Activated T-helper 1 cell treated with anti-CD3 and anti-CD28 coated beads, Interleukin-12 subunit alpha, Interleukin-12 subunit beta, Interleukin-2, Interleukin-4 antibody, amounts not matched to agents 30 ng/mL and 10 ng/mL and 1 ng/mL, durations not matched to agents 14 hours and 24 hours and 36 hours (primary cell): ENCODE measurements at regions of chr19 and their contacts with region 1.

Region 1: GRCh38 chr19:19776041-19777008 is 43.4 kb upstream of the ZNF14 start:
- DNase-seq: peak; percentile 90
- H3K4me3 Mint-ChIP-seq: peak overlapping the region; percentile 96
- H3K27ac Mint-ChIP-seq: peak overlapping the region; percentile 89
- H3K4me1 Mint-ChIP-seq: peaks cover 42% of the 10 kb centered on the region
- H3K27me3 Mint-ChIP-seq: no peaks in the 10 kb centered on the region

Region 2: DNA sequence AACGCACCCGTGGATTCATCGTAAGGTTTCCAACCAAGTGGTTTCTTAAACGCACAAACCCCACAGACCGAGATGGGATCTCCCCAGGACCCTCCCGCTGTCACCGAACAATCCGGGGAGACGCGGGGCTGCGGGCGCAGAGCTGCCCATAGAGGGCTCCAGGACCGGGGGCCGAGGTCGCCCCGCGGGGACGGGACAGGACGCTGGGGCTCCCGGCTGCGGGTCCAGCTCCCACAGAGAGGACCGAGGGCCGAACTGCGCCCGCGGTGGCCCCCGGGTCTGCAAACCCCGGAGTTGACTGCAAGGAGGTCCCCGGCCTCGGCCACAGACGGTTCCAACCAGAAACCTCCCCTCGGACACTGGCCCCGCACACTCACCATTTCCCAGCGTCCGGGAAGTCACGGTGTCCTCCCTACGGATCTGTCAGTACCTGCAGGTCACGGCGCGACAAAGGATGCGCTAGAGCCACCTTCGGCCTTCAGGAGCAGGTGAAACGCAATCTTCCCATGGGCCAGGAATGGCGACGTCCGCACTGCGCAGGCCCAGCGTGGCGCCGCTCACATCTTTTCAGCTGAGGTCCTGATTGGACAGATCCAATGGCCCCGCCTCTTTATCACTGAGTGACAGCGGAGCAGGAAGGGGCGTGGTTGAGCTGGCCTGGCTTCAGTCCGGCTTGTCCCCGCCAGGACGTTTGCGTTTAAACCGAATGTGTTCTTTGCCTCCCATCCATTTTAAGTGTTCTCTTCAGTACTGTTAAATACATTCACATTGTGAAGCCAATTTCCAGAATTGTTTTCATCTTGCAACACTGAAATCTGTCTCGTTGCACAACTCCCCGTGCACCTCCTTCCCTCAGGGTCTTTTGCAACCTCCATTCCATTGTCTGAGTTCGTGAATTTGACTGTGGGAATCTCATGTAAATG is 43.5 kb before region 1 on chr19 and contains the start of gene ZNF14:
- intact Hi-C with region 1: loop called (anchors 1 kb)
- DNase-seq: peak; percentile 86
- H3K4me3 Mint-ChIP-seq: peak within 1 kb of the TSS; percentile 99
- H3K27ac Mint-ChIP-seq: peak within 1 kb of the TSS; percentile 92
- H3K4me1 Mint-ChIP-seq: peaks cover 17% of the 10 kb centered on the region
- H3K27me3 Mint-ChIP-seq: no peaks in the 10 kb centered on the region
- total RNA-seq, gene ZNF14: 4.3 and 5.1 TPM in 2 replicates

Region 3: DNA sequence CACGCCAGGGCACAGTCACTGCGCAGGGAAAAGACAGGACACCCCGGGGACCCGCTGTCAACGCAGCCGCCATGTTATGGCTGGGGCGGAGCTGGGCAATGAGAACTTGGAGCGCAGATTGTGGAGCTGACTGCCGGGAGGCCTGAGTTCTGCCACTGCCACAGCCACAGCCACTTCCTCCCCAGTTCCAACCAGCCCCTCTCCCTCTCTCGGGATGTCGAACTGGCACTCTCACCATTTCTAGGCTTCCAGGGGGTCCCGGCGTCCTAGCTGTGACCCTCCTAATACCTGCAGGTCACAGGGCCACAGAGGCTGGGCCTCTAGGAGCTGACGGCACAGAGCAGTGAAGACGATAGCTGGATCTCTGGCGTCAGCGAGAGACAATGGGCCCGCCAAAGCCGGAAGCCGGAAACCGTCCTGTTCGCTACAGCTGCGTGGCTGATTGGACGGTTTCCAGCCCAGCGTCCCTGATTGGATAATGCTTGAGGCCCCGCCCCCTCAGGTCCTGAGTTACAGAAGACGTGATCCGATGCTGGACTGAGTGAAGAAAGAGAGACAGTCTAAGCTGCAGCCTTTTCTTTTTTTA is 45.1 kb after region 1 on chr19 and contains the start of gene ZNF506:
- intact Hi-C with region 1: loop called (anchors 1 kb)
- DNase-seq: peak; percentile 88
- H3K4me3 Mint-ChIP-seq: peak within 1 kb of the TSS; percentile 98
- H3K27ac Mint-ChIP-seq: peak within 1 kb of the TSS; percentile 97
- H3K4me1 Mint-ChIP-seq: peaks cover 10% of the 10 kb centered on the region
- H3K27me3 Mint-ChIP-seq: no peaks in the 10 kb centered on the region
- total RNA-seq, gene ZNF506: 13.5 and 15.7 TPM in 2 replicates

Region 4: DNA sequence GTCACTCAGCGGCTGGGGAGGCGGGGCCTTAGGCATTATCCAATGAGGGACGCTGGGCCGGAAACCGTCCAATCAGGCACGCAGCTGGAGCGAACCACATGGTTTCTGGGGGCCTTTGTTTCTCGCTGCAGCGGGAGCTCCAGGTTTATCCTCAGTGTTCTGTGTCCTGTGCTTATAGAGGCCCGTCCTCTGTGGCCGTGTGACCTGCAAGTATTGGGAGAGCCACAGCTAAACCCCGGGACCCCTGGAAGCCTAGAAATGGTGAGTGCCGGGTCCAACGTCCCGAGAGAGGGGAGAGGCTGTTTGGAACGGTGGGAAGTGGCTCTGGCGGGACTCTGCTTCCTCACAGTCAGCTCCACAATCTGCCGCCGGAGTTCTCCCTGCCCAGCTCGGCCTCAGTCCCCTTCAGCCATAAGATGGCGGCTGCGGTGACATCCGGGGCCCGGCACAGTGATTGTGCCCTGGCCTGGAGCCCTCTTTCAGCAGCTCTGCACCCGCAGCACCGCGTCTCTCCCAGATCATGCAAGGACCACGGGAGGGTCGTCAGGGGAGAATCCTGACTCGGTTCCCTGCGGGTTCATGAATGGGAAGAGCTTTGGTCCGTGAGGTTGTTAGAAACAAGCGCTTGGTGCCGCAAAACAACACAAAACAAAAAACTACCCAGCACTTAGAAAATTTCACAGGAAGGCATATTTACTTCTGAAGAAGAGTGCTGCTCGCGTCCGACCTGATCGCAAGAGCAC is 89.6 kb after region 1 on chr19 and contains the start of gene ZNF253:
- intact Hi-C with region 1: loop called (anchors 1 kb)
- DNase-seq: peak; percentile 91
- H3K4me3 Mint-ChIP-seq: peak within 1 kb of the TSS; percentile 98
- H3K27ac Mint-ChIP-seq: peak within 1 kb of the TSS; percentile 99
- H3K4me1 Mint-ChIP-seq: peaks cover 18% of the 10 kb centered on the region
- H3K27me3 Mint-ChIP-seq: no peaks in the 10 kb centered on the region
- total RNA-seq, gene ZNF253: 7.8 and 11.1 TPM in 2 replicates

Region 5: GRCh38 chr19:19900729-19901444 is 124.6 kb after region 1 on chr19 and contains the start of gene ZNF93:
- intact Hi-C with region 1: loop called (anchors 1 kb)
- DNase-seq: peak; percentile 85
- H3K4me3 Mint-ChIP-seq: peak within 1 kb of the TSS; percentile 95
- H3K27ac Mint-ChIP-seq: peak within 1 kb of the TSS; percentile 90
- H3K4me1 Mint-ChIP-seq: peaks cover 16% of the 10 kb centered on the region
- H3K27me3 Mint-ChIP-seq: no peaks in the 10 kb centered on the region
- total RNA-seq, gene ZNF93: 6.8 and 7.2 TPM in 2 replicates

Region 6: DNA sequence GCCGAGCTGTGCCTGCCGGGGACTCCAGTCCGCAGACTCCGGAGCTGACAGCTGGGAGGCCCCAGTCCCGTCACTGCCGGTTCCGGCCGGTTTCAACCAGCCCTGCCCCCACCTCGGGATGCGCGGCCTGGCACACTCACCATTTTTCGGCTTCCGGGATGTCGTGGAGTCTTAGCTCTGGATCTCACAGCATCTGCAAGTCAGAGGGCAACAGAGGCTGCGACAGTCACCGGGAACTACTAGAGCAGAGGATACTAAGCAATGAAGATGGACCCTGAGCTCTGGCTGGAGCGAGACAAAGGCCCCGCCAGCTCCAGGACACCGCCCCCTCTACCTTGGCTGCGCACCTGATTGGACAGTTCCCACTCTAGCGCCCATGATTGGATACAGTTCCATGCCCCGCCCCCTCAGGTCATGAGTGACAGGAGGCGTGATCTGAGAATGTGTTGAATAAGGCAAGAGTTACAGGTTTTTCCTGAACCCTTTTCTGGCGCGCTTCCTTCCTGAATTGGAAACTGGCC is 262.9 kb after region 1 on chr19 and contains the start of gene ZNF682:
- intact Hi-C with region 1: loop called (anchors 1 kb)
- DNase-seq: peak; percentile 82
- H3K4me3 Mint-ChIP-seq: peak within 1 kb of the TSS; percentile 91
- H3K27ac Mint-ChIP-seq: peak within 1 kb of the TSS; percentile 88
- H3K4me1 Mint-ChIP-seq: peaks cover 17% of the 10 kb centered on the region
- H3K27me3 Mint-ChIP-seq: no peaks in the 10 kb centered on the region
- total RNA-seq, gene ZNF682: 6.1 and 6.2 TPM in 2 replicates

Region 7: GRCh38 chr19:20077791-20078463 is 301.6 kb after region 1 on chr19 and contains the start of gene ZNF90:
- intact Hi-C with region 1: loop called (anchors 5 kb)
- DNase-seq: peak; percentile 65
- H3K4me3 Mint-ChIP-seq: peak within 1 kb of the TSS; percentile 84
- H3K27ac Mint-ChIP-seq: no peak within 1 kb of the TSS
- H3K4me1 Mint-ChIP-seq: no peaks in the 10 kb centered on the region
- H3K27me3 Mint-ChIP-seq: no peaks in the 10 kb centered on the region
- total RNA-seq, gene ZNF90: 4.6 and 4.8 TPM in 2 replicates